MCF 10A (cell line): ENCODE measurements at regions of chr7 and their contacts with region 1.

Region 1: GRCh38 chr7:70693686-70694360 is 438.1 kb upstream of the GALNT17 start:
- DNase-seq: no peak
- H3K4me3 Mint-ChIP-seq: peak overlapping the region; percentile 75
- H3K27ac Mint-ChIP-seq: no peak overlapping the region
- H3K4me1 Mint-ChIP-seq: no peaks in the 10 kb centered on the region
- H3K27me3 Mint-ChIP-seq: no peaks in the 10 kb centered on the region
- CTCF ChIP-seq: no peak

Region 2: GRCh38 chr7:69643708-69644418 is 1050.0 kb before region 1 on chr7:
- CTCF ChIA-PET with region 1: no interaction called
- POLR2A ChIA-PET with region 1: no interaction called
- intact Hi-C with region 1: no loop called
- DNase-seq: no peak
- H3K4me3 Mint-ChIP-seq: no peak overlapping the region
- H3K27ac Mint-ChIP-seq: no peak overlapping the region
- H3K4me1 Mint-ChIP-seq: no peaks in the 10 kb centered on the region
- H3K27me3 Mint-ChIP-seq: no peaks in the 10 kb centered on the region
- CTCF ChIP-seq: no peak

Region 3: GRCh38 chr7:70040970-70041766 is 652.7 kb before region 1 on chr7:
- CTCF ChIA-PET with region 1: interaction called, 5 read pairs
- POLR2A ChIA-PET with region 1: no interaction called
- intact Hi-C with region 1: loop called (anchors 5 kb)
- DNase-seq: no peak
- H3K4me3 Mint-ChIP-seq: no peak overlapping the region
- H3K27ac Mint-ChIP-seq: no peak overlapping the region
- H3K4me1 Mint-ChIP-seq: no peaks in the 10 kb centered on the region
- H3K27me3 Mint-ChIP-seq: no peaks in the 10 kb centered on the region
- CTCF ChIP-seq: no peak

Region 4: GRCh38 chr7:70193514-70193913 is 500.3 kb before region 1 on chr7:
- CTCF ChIA-PET with region 1: no interaction called
- POLR2A ChIA-PET with region 1: no interaction called
- intact Hi-C with region 1: loop called (anchors 5 kb)
- DNase-seq: no peak
- H3K4me3 Mint-ChIP-seq: no peak overlapping the region
- H3K27ac Mint-ChIP-seq: no peak overlapping the region
- H3K4me1 Mint-ChIP-seq: no peaks in the 10 kb centered on the region
- H3K27me3 Mint-ChIP-seq: no peaks in the 10 kb centered on the region
- CTCF ChIP-seq: no peak

Region 5: GRCh38 chr7:70325509-70326101 is 368.2 kb before region 1 on chr7:
- CTCF ChIA-PET with region 1: no interaction called
- POLR2A ChIA-PET with region 1: no interaction called
- intact Hi-C with region 1: loop called (anchors 10 kb)
- DNase-seq: no peak
- H3K4me3 Mint-ChIP-seq: no peak overlapping the region
- H3K27ac Mint-ChIP-seq: no peak overlapping the region
- H3K4me1 Mint-ChIP-seq: peaks cover 5% of the 10 kb centered on the region
- H3K27me3 Mint-ChIP-seq: no peaks in the 10 kb centered on the region
- CTCF ChIP-seq: no peak

Region 6: GRCh38 chr7:70595753-70596597 is 97.8 kb before region 1 on chr7:
- CTCF ChIA-PET with region 1: no interaction called
- POLR2A ChIA-PET with region 1: no interaction called
- intact Hi-C with region 1: loop called (anchors 5 kb)
- DNase-seq: no peak
- H3K4me3 Mint-ChIP-seq: no peak overlapping the region
- H3K27ac Mint-ChIP-seq: no peak overlapping the region
- H3K4me1 Mint-ChIP-seq: peaks cover 11% of the 10 kb centered on the region
- H3K27me3 Mint-ChIP-seq: no peaks in the 10 kb centered on the region
- CTCF ChIP-seq: no peak

Region 7: DNA sequence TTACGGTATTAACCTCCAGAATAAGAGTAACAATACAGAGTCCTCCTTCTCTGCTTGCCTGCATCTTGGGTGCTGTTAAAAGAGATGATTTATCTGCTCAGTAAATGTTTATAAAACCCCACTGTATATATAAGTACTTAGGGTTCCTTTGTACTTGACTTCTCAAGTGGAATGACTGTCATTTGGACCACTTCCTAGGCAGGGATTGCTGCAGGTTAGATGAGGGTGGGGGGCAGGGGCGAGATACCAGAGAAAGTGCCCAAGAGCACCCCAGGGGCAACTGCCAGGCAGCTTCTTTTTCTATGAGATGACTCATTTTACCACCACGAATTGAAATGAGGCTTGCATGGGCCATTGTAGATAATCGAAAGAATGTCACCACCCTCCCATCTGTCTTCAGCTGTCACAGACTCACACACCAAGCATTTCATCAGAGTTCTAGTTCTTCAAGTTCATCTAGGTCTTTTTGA is 16.2 kb after region 1 on chr7:
- CTCF ChIA-PET with region 1: interaction called, 10 read pairs
- POLR2A ChIA-PET with region 1: no interaction called
- intact Hi-C with region 1: no loop called
- DNase-seq: no peak
- H3K4me3 Mint-ChIP-seq: no peak overlapping the region
- H3K27ac Mint-ChIP-seq: no peak overlapping the region
- H3K4me1 Mint-ChIP-seq: peaks cover 5% of the 10 kb centered on the region
- H3K27me3 Mint-ChIP-seq: no peaks in the 10 kb centered on the region
- CTCF ChIP-seq: no peak